Endothelial cell of umbilical vein (primary cell): ENCODE measurements at regions of chr1 and their contacts with region 1.

Region 1: DNA sequence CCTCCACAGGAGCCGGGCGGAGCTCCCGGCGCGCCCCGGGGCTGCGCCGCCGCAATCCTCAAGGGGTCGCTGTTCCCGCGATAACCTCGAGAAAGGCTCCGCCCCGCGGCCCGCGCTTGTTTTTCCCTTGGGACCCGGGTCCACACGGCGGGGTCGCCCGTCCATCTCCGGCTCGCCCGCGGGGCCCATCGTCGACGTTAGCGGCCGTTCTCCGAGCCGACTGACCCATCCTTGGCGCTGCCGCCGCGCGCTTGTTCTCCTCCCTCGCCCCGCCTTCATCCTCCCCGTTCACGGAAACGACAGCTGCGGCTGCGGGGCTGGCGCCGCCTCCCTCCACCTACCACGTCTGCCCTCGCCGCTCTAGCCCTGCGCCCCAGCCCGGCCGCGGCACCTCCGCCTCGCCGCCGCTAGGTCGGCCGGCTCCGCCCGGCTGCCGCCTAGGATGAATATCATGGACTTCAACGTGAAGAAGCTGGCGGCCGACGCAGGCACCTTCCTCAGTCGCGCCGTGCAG is at the start of gene SH3GLB1:
- DNase-seq: peak; percentile 91
- H3K4me3 ChIP-seq: peak within 1 kb of the TSS; percentile 88 to 96 (median 94)
- H3K27ac ChIP-seq: peak within 1 kb of the TSS; percentile 85
- H3K4me1 ChIP-seq: peaks cover 28% of the 10 kb centered on the region
- H3K27me3 ChIP-seq: no peaks in the 10 kb centered on the region
- CTCF ChIP-seq: peak; percentile 96
- POLR2A ChIP-seq: peak; percentile 78
- total RNA-seq, gene SH3GLB1: 140 and 148 TPM in 2 replicates

Region 2: GRCh38 chr1:86239894-86240293 is 464.6 kb before region 1 on chr1:
- CTCF ChIA-PET with region 1: no interaction called
- POLR2A ChIA-PET with region 1: no interaction called
- dilution Hi-C with region 1: no loop called
- intact Hi-C with region 1: no loop called
- DNase-seq: no peak
- H3K4me3 ChIP-seq: no peak overlapping the region
- H3K27ac ChIP-seq: no peak overlapping the region
- H3K4me1 ChIP-seq: no peaks in the 10 kb centered on the region
- H3K27me3 ChIP-seq: peaks cover 0 to 2% of the 10 kb centered on the region in 2 experiments
- CTCF ChIP-seq: no peak
- POLR2A ChIP-seq: no peak

Region 3: DNA sequence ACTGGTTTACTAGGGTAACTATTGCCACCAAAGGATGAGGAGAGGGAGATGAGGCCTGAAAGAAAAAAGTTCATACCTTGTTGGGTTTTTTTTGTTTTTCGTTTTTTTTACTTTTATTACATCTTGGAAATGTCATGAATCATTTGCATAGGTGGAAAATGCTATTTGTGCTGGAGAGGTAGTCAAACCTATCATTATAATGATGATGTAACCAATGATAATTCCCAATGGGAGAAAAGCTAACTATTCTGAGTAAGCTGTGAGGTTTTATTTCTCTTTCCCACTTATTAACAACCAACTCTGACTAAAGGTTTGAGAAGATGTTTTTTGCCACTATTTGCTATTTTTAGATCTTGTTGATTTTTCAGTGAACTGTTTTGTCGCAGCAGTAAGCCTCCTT is 28.8 kb after region 1 on chr1:
- CTCF ChIA-PET with region 1: interaction called, 36 read pairs
- POLR2A ChIA-PET with region 1: no interaction called
- dilution Hi-C with region 1: no loop called
- intact Hi-C with region 1: no loop called
- DNase-seq: no peak
- H3K4me3 ChIP-seq: no peak overlapping the region
- H3K27ac ChIP-seq: no peak overlapping the region
- H3K4me1 ChIP-seq: no peaks in the 10 kb centered on the region
- H3K27me3 ChIP-seq: no peaks in the 10 kb centered on the region
- CTCF ChIP-seq: no peak
- POLR2A ChIP-seq: no peak

Region 4: DNA sequence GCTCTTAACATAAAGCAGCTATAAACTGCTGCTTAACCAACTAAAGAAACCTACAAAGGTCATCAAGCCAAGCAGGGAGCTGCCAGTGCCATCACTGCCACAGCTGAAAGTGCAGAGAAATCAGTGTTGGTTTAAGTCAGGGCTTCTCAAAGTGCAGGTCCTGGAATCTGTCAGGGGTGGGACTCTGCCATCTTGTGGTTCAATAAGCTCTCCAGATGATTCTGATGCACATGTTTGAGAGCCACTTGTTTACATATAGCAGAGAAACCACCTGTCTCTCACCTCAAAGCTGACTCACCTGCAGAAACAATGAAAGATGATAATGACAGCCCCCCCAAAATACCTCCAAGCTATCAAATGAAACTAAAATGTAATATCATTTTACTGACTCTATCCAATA is 49.2 kb after region 1 on chr1:
- CTCF ChIA-PET with region 1: interaction called, 15 read pairs
- POLR2A ChIA-PET with region 1: no interaction called
- dilution Hi-C with region 1: no loop called
- intact Hi-C with region 1: no loop called
- DNase-seq: peak; percentile 28
- H3K4me3 ChIP-seq: no peak overlapping the region
- H3K27ac ChIP-seq: no peak overlapping the region
- H3K4me1 ChIP-seq: no peaks in the 10 kb centered on the region
- H3K27me3 ChIP-seq: no peaks in the 10 kb centered on the region
- CTCF ChIP-seq: peak in 1 of 2 donors; percentile 15
- POLR2A ChIP-seq: no peak

Region 5: GRCh38 chr1:86774305-86775295 is 70.1 kb after region 1 on chr1:
- CTCF ChIA-PET with region 1: interaction called, 8 read pairs
- POLR2A ChIA-PET with region 1: no interaction called
- dilution Hi-C with region 1: no loop called
- intact Hi-C with region 1: loop called (anchors 2 kb)
- DNase-seq: peak; percentile 85
- H3K4me3 ChIP-seq: peak overlapping the region in 1 of 3 experiments; percentile 50
- H3K27ac ChIP-seq: peak overlapping the region; percentile 81
- H3K4me1 ChIP-seq: peaks cover 42% of the 10 kb centered on the region
- H3K27me3 ChIP-seq: no peaks in the 10 kb centered on the region
- CTCF ChIP-seq: no peak
- POLR2A ChIP-seq: no peak